ENCODE measurements at regions of chr7 and their contacts with region 1.

Region 1: DNA sequence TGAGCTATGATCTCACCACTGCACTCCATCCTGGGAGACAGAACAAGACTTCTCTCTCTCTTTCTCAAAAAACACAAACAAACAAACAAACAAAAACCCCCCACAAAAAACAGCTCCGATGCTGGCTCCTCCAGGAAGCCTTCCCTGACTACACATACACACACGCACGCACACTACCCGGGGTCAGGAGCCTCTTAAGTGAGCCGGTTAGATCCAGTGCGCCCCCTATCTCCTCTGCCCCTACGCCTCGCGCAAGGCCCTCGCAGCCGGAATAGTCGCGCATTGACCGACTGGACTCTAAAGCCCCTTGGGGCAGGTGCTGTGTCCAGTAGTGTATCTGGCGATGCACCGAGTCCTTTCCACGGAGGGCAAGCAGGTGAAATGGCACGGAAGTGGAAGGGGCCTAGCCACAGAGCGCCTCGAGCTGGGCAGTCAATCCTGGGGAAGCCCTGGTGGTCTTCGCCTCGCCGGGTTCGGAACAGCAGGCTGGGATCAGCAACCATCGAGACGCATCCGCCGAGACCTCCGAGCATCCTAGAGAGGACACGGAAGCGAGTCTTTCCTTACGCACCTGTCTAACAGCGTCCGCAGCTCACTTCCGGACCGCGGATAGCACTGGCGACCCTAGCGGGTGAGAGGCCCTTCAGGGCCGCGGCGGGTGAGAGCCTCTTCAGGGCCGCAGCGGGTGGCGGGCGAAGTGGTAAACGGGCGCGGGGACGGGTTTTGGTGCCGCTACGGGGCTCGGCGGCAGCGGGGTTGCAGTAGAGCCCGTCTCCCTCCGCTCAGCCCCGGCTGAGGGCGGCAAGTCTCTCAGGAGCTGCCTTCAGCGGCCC is at the start of gene ZSCAN25:
- DNase-seq: peak; percentile 78
- ATAC-seq: peak; percentile 95
- H3K4me3 Mint-ChIP-seq: peak within 1 kb of the TSS; percentile 97
- H3K27ac Mint-ChIP-seq: peak within 1 kb of the TSS; percentile 90
- H3K4me1 Mint-ChIP-seq: peaks cover 30% of the 10 kb centered on the region
- H3K27me3 Mint-ChIP-seq: no peaks in the 10 kb centered on the region
- CTCF ChIP-seq: no peak
- total RNA-seq, gene ZSCAN25: 28.5 and 33.4 TPM in 2 replicates

Region 2: DNA sequence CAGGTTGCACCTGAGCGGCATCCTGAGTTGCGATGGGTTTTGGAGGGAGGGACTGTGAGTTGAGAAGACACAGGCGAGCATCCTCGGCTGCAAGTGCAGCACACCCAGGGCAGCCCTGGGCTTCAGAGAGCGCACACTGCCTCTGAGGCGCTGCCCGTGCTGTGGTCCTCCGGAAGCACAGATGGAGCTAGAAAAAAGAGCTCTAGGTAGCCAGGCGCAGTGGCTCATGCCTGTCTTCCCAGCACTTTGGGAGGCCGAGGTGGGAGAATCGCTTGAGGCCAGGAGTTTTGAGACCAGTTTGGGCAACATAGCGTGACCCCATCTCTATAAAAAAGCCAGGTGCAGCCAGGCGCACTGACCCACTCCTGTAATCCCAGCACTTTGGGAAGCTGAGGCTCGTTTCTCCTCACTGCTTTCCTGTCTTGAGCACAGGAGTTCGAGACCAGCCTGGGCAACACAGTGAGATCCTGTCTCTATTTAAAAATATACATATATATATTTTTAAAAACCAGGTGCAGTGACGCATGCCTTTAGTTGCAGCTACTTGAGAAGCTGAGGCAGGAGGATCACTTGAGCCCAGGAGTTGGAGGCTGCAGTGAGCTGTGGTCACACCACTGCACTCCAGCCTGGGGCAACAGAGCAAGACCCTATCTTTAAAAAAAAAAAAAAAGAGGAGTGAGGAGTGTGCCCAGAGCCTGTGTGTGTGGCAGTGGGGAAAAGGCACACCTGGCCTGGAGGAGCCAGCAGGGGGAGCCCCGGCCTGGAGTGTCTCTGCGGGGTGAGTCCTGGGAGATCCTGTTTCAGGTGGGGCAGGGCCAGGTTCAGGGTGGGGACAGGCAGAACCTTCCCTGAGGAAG is 251.4 kb before region 1 on chr7:
- CTCF ChIA-PET with region 1: interaction called, 3 read pairs
- POLR2A ChIA-PET with region 1: interaction called, 3 read pairs
- intact Hi-C with region 1: loop called (anchors 5 kb)
- DNase-seq: peak; percentile 55
- ATAC-seq: peak; percentile 99
- H3K4me3 Mint-ChIP-seq: no peak overlapping the region
- H3K27ac Mint-ChIP-seq: no peak overlapping the region
- H3K4me1 Mint-ChIP-seq: no peaks in the 10 kb centered on the region
- H3K27me3 Mint-ChIP-seq: no peaks in the 10 kb centered on the region
- CTCF ChIP-seq: no peak

Region 3: DNA sequence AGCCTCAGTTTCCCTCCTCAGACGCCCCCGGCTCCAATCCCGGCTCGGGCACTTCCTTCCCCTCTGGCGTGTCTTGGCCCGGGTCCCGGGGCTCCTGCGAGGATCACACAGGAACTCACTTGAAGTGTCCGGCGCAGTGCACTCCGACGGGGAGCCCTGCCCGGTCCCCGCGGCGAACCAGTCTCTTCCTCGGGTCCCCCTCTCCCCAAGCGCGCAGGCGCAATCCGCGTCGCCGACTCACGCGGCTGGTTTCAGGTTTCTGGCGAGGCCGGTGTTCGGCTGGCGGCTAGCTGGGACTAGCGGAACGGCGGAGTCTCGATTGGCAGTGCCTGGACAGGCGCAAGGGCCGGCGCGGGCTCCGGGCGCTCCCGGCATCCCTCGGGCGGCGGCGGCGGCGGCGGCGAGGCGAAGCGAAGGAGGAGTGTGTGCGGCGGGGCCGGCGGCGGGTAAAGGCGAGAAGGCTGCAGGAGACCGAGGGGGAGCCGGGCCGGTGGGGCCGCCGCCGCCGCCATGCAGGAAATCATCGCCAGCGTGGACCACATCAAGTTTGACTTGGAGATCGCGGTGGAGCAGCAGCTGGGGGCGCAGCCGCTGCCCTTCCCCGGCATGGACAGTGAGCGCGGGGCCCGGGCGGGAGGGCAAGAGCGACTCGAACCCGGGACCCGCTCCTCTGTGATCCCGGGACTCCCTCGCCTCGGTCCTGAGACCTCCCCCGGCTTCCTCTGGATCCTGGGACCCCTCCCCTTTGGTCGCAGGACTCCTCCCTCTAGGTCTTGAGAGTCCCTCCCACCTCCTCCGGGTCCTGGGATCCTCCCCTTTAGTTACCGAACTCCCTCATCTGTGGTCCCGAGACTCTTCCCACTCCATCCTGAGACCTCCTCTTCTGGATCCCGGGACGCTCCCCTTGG is 177.7 kb before region 1 on chr7 and contains the starts of genes CPSF4 and PTCD1:
- CTCF ChIA-PET with region 1: no interaction called
- POLR2A ChIA-PET with region 1: no interaction called
- intact Hi-C with region 1: loop called (anchors 1 kb)
- DNase-seq: peak; percentile 84
- ATAC-seq: peak; percentile 94
- H3K4me3 Mint-ChIP-seq: peak within 1 kb of the TSS; percentile 98
- H3K27ac Mint-ChIP-seq: peak within 1 kb of the TSS; percentile 94
- H3K4me1 Mint-ChIP-seq: peaks cover 32% of the 10 kb centered on the region
- H3K27me3 Mint-ChIP-seq: no peaks in the 10 kb centered on the region
- CTCF ChIP-seq: no peak
- total RNA-seq, gene CPSF4: 46.2 and 60.9 TPM in 2 replicates
- total RNA-seq, gene PTCD1: 8.4 and 13.4 TPM in 2 replicates

Region 4: DNA sequence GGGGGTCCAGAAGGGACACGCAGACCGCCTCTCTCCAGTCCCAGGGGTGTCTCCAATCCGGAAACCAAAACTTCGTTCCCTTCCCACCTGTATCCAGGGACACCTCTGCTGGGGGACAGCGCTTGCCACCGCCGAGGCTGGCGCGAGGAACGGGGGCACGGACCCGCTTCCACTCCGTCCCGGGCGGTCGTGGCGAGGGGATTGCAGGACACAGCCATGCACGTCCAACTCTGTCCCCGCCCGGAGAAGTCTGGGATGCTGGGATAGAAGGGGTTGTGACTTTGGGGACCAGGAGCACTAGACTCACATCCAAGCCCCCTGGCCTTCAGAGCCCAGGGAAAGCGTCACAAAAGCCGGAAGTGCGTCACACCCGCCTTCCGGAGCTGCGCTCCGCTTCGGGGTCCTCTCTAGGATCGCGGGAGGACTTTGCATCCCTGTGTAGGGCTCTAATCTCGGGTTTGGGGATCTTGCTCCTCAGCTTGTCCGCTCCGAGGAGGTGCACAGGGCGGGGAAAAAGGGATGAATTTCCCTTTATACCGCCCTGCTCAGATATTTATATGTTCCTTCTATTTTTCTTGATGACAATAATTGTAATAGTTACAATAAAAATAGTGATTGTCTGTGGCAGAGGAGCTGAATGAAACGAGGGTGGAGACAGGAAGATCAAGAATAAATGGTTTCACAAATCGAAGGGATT is 64.7 kb before region 1 on chr7 and contains the start of gene FAM200A:
- CTCF ChIA-PET with region 1: no interaction called
- POLR2A ChIA-PET with region 1: interaction called, 5 read pairs
- intact Hi-C with region 1: loop called (anchors 1 kb)
- DNase-seq: peak; percentile 78
- ATAC-seq: peak; percentile 98
- H3K4me3 Mint-ChIP-seq: peak within 1 kb of the TSS; percentile 91
- H3K27ac Mint-ChIP-seq: peak within 1 kb of the TSS; percentile 87
- H3K4me1 Mint-ChIP-seq: peaks cover 33% of the 10 kb centered on the region
- H3K27me3 Mint-ChIP-seq: no peaks in the 10 kb centered on the region
- CTCF ChIP-seq: no peak
- total RNA-seq, gene FAM200A: 9.2 and 9.3 TPM in 2 replicates

Region 5: DNA sequence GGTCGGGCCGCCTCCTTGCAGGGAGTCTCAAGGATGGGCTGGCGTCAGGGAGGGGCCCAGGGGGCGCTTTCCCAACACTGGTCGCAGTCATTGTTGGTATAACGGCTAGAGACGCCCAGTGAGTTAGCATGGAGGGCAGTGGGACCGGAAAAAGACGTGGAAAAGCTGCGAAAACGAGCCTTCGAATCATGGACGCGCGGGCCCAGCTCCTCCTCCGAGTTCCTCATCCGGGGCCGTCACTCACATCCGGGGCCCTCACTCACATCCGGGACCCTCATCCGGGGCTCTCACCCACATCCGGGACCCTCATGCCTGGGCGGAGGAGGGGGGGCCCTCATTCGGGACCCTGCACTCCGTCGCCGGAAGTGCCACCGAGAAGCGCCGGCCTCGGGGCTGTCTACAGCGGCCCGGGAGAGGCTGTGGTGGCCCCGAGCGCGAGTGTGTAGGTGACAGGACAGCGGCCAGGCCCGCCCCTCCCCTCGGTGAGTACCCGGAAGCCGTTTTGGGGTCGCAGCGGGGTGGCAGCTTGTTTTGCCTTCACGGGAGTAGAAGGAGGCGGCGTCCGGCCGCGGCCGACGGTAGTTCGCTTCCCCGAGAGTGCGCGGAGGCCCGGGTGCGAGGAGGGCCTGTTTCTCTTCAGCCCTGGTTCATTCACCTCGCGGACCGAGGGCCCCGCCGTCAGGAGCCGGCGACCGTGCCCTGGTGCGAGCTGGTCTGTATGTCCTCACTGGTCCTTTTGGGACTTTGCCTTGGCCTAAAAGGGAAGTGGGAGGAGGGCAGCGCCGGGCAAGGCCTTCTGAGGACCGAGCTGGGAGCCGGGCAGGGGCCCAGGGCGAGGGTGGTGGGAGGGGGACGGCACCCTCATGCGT is 58.0 kb before region 1 on chr7 and contains the start of gene ZNF655:
- CTCF ChIA-PET with region 1: interaction called, 3 read pairs
- POLR2A ChIA-PET with region 1: interaction called, 43 read pairs
- intact Hi-C with region 1: loop called (anchors 2 kb)
- DNase-seq: peak; percentile 85
- ATAC-seq: peak; percentile 79
- H3K4me3 Mint-ChIP-seq: peak within 1 kb of the TSS; percentile 97
- H3K27ac Mint-ChIP-seq: peak within 1 kb of the TSS; percentile 97
- H3K4me1 Mint-ChIP-seq: peaks cover 49% of the 10 kb centered on the region
- H3K27me3 Mint-ChIP-seq: no peaks in the 10 kb centered on the region
- CTCF ChIP-seq: no peak
- total RNA-seq, gene ZNF655: 98.5 and 116 TPM in 2 replicates

Region 6: GRCh38 chr7:101185258-101185839 is 1568.8 kb after region 1 on chr7:
- CTCF ChIA-PET with region 1: no interaction called
- POLR2A ChIA-PET with region 1: no interaction called
- intact Hi-C with region 1: no loop called
- DNase-seq: no peak
- ATAC-seq: no peak
- H3K4me3 Mint-ChIP-seq: no peak overlapping the region
- H3K27ac Mint-ChIP-seq: no peak overlapping the region
- H3K4me1 Mint-ChIP-seq: peaks cover 6% of the 10 kb centered on the region
- H3K27me3 Mint-ChIP-seq: peaks cover 21% of the 10 kb centered on the region
- CTCF ChIP-seq: no peak